Lower leg skin (tissue), 4 donors: ENCODE measurements at regions of chr11 and their contacts with region 1.

Region 1: GRCh38 chr11:121591405-121592033 is 138.8 kb upstream of the SORL1-AS1 start:
- DNase-seq: peak in 1 of 2 donors; percentile 77
- H3K4me3 ChIP-seq: no peak overlapping the region
- CTCF ChIP-seq: peak in 1 of 3 donors; percentile 90
- POLR2A ChIP-seq: no peak

Region 2: DNA sequence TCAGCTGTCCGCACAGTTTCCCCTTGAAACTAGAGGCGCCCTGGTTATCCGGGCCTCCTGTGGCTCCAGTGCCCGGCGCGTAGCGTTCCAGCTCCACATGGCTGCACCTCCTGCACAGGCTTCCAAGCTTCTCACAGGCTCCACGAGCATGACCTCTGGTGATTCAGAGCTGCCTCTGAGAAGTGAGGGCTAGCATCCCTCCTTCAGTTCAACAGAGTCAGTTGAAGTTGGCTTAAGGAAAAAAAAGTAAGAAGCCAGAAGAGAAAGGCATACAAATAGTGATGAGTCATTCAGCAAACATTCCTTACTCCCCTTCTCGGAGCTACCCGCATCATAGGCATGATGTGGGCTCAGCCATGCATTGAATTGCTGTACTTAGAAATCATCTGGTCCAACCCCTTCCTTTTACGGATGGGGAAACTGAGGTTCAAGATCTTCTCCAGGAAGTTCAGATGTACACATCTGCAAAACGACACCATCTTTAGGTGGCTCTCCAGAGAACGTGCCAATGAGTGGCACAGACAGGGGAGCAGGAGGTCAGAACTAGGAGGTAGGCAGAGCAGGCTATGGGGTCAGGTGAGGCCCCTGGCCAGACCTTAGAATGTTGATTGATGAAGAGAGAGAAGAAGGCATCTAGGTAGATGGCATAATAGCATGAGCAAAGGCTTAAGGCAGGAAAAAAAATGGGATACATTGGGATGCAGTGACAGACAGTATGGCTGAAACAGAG is 783.9 kb before region 1 on chr11:
- intact Hi-C with region 1: no loop called
- DNase-seq: no peak
- H3K4me3 ChIP-seq: no peak overlapping the region
- CTCF ChIP-seq: no peak
- POLR2A ChIP-seq: no peak

Region 3: GRCh38 chr11:121321614-121322243 is 269.8 kb before region 1 on chr11:
- intact Hi-C with region 1: loop called (anchors 5 kb)
- DNase-seq: no peak
- H3K4me3 ChIP-seq: no peak overlapping the region
- CTCF ChIP-seq: no peak
- POLR2A ChIP-seq: no peak

Region 4: GRCh38 chr11:121426476-121427399 is 164.8 kb before region 1 on chr11:
- intact Hi-C with region 1: no loop called
- DNase-seq: peak in 1 of 2 donors; percentile 85
- H3K4me3 ChIP-seq: no peak overlapping the region
- CTCF ChIP-seq: no peak
- POLR2A ChIP-seq: no peak